SK-N-SH (cell line): ENCODE measurements at regions of chr11 and their contacts with region 1.

Region 1: DNA sequence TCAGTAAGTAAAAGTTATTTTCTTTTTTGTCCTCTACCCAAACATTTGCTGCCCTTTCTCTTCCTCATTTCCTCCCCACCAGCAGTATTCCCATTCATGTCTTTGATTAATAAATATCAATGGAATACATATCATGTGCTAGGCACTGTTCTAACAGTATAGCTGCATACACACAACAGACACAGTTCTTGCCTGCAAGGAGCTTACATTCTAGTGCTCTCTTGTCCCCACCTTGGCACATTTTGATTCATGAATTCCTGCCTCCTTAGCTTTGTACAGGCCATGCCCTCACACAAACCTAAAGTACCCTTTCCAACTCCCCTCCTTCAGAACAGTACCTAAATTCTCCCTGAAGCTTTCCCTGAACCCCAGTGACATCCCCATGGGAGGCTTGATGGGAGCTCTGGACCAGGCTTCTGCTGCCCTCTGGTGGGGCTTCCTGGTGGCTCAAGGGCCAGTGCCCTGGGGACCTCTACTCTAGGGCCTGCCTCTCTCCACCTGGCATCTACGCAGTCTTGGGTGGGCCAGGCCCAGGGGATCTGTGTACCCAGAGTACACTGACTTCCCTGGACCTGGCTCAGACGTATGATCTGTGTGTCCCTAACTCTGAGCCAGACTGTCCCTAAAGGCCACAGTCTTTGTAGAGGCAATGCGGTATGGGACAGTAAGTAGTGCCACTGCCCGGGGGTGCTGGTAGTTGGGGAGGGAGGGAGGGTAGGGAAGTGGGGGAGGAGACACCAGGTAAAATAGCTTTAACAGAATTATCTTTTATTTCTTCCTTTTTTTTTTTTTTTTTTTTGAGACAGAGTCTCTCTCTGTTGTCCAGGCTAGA is 14.1 kb downstream of the RPS13 start:
- DNase-seq: peak; percentile 79
- H3K4me3 ChIP-seq: no peak overlapping the region; a peak in 1 of 4 replicates
- H3K27ac ChIP-seq: no peak overlapping the region
- H3K4me1 ChIP-seq: no peaks in the 10 kb centered on the region
- H3K27me3 ChIP-seq: no peaks in the 10 kb centered on the region
- CTCF ChIP-seq: peak; percentile 75
- EP300 ChIP-seq: no peak
- RAD21 ChIP-seq: peak; percentile 89

Region 2: DNA sequence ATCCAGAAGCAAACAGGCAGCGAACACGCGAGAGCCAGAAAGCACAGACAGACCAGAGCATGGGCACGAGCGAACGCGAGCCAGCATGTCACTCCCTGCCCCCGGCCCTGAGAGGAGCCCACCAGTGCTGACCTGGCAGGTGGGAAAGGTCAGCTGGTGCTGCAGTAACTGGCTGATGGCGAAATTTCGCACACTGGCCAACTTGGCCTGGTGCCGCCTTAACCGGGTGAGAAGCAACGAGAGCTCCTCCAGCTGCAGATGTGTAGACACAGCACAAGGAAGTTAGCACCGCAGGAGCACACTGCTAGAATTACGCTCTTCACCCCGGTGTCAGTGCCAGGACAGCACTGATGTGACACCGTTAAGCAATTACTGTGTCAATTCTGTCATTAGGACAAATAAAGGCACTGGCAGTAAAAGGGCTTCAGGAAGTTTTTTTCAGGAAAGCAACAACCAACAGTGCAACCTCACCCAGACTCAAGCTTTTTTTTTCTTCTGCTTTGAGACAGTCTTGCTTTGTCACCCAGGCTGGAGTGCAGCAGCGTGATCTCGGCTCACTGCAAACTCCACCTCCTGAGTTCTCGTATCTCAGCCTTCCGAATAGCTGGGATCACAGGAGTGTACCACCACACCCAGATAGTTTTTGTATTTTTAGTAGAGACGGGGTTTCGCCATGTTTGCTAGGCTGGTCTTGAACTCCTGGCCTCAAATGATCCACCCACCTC is 248.2 kb before region 1 on chr11:
- CTCF ChIA-PET with region 1: interaction called, 19 read pairs
- POLR2A ChIA-PET with region 1: no interaction called
- DNase-seq: no peak
- H3K4me3 ChIP-seq: no peak overlapping the region
- H3K27ac ChIP-seq: no peak overlapping the region
- H3K4me1 ChIP-seq: peaks cover 2 to 4% of the 10 kb centered on the region in 2 experiments; a peak in 2 of 4 replicates
- H3K27me3 ChIP-seq: no peaks in the 10 kb centered on the region
- CTCF ChIP-seq: no peak
- EP300 ChIP-seq: no peak
- RAD21 ChIP-seq: no peak

Region 3: GRCh38 chr11:16935518-16936302 is 127.7 kb before region 1 on chr11:
- CTCF ChIA-PET with region 1: interaction called, 228 read pairs
- POLR2A ChIA-PET with region 1: no interaction called
- DNase-seq: peak; percentile 50
- H3K4me3 ChIP-seq: no peak overlapping the region
- H3K27ac ChIP-seq: no peak overlapping the region
- H3K4me1 ChIP-seq: peaks cover 0 to 3% of the 10 kb centered on the region in 2 experiments; a peak in 1 of 4 replicates
- H3K27me3 ChIP-seq: peaks cover 10% of the 10 kb centered on the region; the same call in 1 of the 2 replicates
- CTCF ChIP-seq: peak; percentile 76
- EP300 ChIP-seq: no peak
- RAD21 ChIP-seq: peak; percentile 68

Region 4: DNA sequence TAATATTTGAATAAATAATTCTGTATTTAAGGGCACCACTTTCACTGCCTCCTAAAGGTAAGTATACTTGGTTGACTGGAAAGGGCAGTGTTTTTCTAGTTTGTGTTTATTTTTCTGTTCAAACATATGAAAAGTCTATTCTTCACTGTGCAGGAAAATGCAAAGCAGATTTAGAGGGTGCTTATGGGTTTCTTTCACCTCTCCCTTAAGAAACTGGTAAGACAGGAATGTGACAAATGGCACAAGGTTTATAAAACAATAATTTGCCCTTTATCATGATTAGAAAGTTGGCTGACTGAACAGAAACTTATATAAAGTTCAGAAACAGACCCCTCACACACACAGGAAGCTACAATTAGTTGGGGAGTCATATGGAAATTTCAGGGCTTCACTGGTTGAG is 109.7 kb before region 1 on chr11:
- CTCF ChIA-PET with region 1: interaction called, 228 read pairs
- POLR2A ChIA-PET with region 1: no interaction called
- DNase-seq: no peak
- H3K4me3 ChIP-seq: no peak overlapping the region
- H3K27ac ChIP-seq: no peak overlapping the region
- H3K4me1 ChIP-seq: no peaks in the 10 kb centered on the region
- H3K27me3 ChIP-seq: no peaks in the 10 kb centered on the region
- CTCF ChIP-seq: no peak
- EP300 ChIP-seq: no peak
- RAD21 ChIP-seq: no peak

Region 5: DNA sequence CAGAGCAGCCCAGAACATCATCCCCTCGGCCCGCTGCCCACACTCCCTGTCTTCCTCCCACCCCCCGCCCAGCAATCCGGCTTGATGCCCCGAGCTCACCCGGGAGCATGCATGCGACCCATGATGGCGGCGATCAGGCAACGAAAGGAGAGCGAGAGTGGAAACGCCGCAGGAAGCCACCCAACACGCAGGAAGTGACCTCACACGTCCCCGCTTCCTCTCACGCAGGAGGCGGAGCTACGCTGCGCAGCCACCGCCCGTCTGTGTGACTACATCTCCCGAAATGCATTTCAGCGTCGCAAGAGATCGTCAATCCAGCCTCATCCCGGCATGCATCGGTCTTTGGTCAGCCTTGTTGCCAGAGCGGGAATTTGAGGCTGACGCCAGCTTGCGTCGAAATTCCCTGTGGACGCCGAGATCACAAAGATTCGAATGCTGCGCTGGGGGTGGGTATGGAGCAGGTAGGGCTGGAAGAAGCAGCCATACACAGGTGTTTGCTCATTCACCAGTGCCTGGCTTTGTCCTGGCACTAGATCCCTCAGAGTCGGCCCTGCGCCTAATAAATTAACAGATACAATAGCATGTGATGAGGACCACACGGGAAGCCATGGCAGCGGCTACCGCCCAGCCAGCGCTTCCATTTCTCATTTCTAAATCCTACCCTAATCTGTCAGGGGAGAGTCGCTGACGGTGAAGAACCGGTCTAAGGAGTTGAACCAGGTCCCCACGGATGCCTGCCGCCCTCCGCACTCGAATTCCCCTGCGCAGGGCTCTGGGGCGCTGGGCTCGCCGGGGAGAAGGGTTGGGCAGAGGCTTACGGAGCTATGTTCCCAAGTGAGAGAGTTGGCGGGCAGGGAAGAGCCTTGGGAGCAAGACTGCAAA is 14.4 kb after region 1 on chr11 and contains the start of gene RPS13:
- CTCF ChIA-PET with region 1: interaction called, 12 read pairs
- POLR2A ChIA-PET with region 1: interaction called, 6 read pairs
- DNase-seq: peak; percentile 92
- H3K4me3 ChIP-seq: peak within 1 kb of the TSS; percentile 98
- H3K27ac ChIP-seq: peak within 1 kb of the TSS; percentile 79 to 87
- H3K4me1 ChIP-seq: peaks cover 7 to 18% of the 10 kb centered on the region in 2 experiments; a peak in 2 of 4 replicates
- H3K27me3 ChIP-seq: no peaks in the 10 kb centered on the region
- CTCF ChIP-seq: no peak
- EP300 ChIP-seq: peak in 1 of 2 experiments; percentile 31; a peak in 1 of 4 replicates
- RAD21 ChIP-seq: no peak
- polyA plus RNA-seq, gene RPS13: 950 and 997 TPM in 2 replicates